Colonic mucosa (tissue), 4 donors: ENCODE measurements at regions of chr17 and their contacts with region 1.

Region 1: DNA sequence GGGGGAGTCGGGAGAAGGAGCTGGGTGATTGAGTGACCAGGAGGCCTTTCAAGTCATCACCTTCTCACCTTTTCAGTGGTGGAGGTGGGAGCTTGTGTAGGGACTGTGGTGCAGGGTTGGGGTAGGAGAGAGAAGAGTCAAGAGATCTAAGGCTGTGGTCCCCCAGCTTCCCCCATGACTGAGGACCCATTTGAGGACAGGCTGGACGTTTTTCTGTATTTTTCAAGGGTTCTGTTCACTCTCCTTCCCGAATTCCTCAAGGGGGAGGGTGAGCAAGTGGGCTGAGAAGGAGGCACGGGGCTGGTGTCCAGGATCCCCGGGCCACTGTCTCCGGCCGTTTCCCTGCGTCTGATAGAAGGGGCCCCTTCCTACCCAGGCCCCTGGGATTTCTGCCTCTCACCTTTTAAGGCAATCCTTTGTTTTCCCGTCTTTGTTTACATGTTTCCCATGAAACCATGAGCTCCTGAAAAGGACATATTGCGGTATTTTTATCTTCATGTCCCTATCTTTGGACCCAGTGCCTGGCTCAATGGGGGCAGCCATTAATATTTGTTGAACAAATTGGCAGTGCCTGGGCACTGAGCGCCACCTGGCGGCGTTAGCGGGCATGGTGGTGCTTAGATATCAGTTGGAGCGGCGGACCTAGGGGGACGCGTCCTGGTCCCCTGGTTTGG is 9.2 kb upstream of the CD300A start:
- DNase-seq: peak; percentile 81
- H3K4me3 ChIP-seq: no peak overlapping the region
- H3K27ac ChIP-seq: no peak overlapping the region
- H3K4me1 ChIP-seq: peaks cover 16% of the 10 kb centered on the region
- H3K27me3 ChIP-seq: no peaks in the 10 kb centered on the region
- CTCF ChIP-seq: peak; percentile 92

Region 2: DNA sequence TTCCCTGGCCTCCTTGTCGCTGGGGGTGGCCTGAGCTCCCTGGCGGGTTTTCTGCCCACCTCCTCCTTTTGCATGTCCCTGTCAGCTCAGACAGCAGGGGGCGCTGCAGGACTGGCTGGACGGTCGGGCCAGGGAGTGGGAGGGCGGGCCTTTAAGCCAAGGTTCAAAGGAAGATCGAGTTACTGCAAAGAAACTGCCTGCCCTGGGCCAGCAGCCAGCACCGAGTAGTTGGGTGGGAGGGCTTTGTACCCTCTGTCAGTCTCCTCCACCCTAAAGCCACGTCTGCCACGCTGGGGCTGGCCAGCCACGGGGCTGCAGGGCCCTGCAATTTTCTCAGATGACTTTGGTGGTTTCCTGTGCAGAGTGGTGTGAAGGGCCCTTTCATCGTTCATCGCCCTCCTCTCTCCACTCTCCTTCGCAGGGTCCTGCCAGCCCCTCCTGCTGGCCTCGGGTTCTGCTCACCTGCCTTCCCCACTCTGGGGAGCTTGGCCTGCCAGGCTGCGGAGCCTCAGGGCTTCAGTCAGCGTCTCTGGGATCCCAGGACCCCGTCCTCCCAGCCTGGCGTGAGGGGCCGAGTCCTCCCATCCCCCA is 77.7 kb before region 1 on chr17:
- intact Hi-C with region 1: loop called (anchors 1 kb)
- DNase-seq: peak; percentile 97
- H3K4me3 ChIP-seq: no peak overlapping the region
- H3K27ac ChIP-seq: peak overlapping the region; percentile 88
- H3K4me1 ChIP-seq: peaks cover 23% of the 10 kb centered on the region
- H3K27me3 ChIP-seq: no peaks in the 10 kb centered on the region
- CTCF ChIP-seq: peak; percentile 91